ENCODE measurements at regions of chr1 and their contacts with region 1.

Region 1: DNA sequence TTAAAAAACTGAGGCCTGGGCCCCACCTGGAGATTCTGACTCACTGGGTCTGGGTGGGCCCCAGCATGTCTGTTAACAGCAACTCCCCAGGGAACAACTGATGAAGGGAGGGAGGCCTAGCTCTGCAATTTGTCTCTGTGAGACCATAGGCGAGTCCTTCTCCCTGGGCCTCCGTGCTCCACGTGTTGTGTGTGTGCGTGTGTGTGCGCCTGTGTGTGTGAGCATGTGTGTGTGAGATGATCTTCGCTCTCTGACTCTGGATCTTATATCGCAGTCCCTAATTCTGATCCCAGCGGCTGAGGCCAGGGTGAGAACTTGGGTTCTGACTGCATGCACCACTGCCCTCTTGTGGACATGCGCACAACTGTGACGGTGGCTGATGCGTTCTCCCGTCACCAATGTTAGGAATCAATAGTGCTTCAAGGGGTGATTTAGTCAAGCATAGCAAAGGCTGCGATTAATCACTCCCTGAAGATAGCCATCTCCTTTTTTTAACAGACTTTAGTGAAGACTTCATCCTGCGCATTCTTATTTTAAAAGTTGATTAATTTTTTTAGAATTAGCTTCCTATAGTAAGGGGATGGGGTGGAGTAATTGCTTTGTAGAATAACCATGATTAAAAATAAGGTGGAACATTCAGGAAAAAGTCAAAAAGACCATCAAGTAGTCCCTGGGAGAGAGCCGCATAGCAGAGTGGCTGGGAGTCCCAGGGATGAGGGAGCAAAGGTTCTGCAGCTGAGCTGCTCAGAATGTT is 62.4 kb upstream of the USP24 start:
- DNase-seq: peak; percentile 80 to 86 (median 81)
- H3K4me3 ChIP-seq: peak overlapping the region in 1 of 7 experiments; percentile 2
- H3K27ac ChIP-seq: no peak overlapping the region
- H3K4me1 ChIP-seq: peaks cover 0 to 8% (median 3%) of the 10 kb centered on the region in 4 experiments
- H3K27me3 ChIP-seq: peaks cover 0 to 3% (median 0%) of the 10 kb centered on the region in 5 experiments

Region 2: DNA sequence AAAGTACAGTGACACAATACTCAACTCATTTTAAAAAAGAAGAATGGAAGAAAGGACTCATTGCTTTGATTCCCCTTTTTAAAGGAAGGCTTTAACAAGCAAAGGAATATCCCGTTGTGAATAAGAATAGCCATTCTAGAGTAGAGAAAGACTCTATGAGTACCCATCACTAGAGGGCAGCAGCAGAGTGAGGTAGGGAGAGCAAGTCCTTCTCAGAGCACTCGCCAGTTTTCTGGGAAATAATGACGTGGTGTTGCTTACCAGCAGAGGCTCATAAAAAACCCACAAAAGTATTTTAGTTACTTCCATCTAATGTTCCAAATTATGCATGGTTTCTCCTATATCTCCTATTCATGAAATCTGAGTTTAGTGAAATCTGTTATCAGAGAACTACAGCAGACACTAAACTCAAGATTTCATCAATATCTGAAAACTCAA is 137.0 kb before region 1 on chr1:
- CTCF ChIA-PET with region 1: interaction called, 68 read pairs
- POLR2A ChIA-PET with region 1: no interaction called
- DNase-seq: peak; percentile 84 to 90 (median 89)
- H3K4me3 ChIP-seq: no peak overlapping the region
- H3K27ac ChIP-seq: no peak overlapping the region
- H3K4me1 ChIP-seq: peaks cover 0 to 13% (median 6%) of the 10 kb centered on the region in 4 experiments
- H3K27me3 ChIP-seq: no peaks in the 10 kb centered on the region

Region 3: DNA sequence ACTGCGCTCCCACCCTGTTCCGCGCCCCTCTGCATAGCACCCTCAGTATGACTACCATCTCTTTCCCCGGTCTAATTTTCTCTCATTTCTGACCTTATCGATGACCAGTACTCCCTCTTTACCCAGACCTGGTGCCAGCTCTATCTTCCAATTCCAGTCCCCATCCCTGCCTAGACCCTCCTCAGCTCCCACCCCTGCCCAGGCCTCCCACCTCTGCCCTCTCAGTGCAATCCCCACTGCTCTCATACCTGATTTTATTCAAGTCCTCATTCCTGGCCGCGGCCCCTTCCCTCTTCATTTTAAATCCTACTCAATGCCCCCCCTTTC is 63.7 kb before region 1 on chr1:
- CTCF ChIA-PET with region 1: interaction called, 10 read pairs
- POLR2A ChIA-PET with region 1: no interaction called
- DNase-seq: no peak
- H3K4me3 ChIP-seq: peak overlapping the region; percentile 70 to 91 (median 89)
- H3K27ac ChIP-seq: peak overlapping the region; percentile 40 to 95
- H3K4me1 ChIP-seq: peaks cover 60 to 89% (median 72%) of the 10 kb centered on the region in 4 experiments
- H3K27me3 ChIP-seq: no peaks in the 10 kb centered on the region

Region 4: GRCh38 chr1:55301912-55302311 is 24.4 kb after region 1 on chr1:
- CTCF ChIA-PET with region 1: no interaction called
- POLR2A ChIA-PET with region 1: no interaction called
- DNase-seq: no peak
- H3K4me3 ChIP-seq: no peak overlapping the region
- H3K27ac ChIP-seq: no peak overlapping the region
- H3K4me1 ChIP-seq: peaks cover 0 to 5% (median under 1%) of the 10 kb centered on the region in 4 experiments
- H3K27me3 ChIP-seq: peaks cover 0 to 5% (median 0%) of the 10 kb centered on the region in 5 experiments

Region 5: DNA sequence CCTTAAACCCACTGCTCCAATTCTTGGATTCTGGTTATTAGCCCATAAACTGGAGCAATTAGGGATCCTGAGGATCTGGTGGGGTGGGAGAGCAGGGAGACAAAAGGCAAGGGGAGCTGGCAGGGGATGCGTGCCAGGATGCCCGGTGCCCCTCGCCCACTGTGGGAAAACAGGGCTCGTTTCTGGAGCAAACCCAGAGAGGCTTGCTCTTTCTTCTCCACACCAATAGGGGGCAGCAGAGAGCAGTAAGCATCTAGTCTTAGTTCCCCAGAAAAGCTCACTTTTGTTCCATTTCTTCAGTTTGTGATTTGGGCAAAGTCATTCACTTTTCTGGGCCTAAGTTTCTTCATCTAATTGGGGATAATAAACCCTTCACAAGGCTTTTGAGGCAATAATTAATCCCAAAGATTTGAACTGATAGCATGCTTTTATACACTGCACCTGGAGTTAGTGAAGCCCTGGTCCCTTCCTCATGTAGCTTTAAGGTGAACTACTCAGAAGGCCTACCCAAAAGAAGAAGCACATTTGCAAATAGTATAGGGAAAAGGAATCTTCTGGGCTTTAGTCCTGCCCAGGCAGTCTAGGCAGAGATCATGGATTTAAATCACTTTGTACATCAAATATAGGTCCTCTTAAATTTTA is 98.2 kb after region 1 on chr1:
- CTCF ChIA-PET with region 1: no interaction called
- POLR2A ChIA-PET with region 1: no interaction called
- DNase-seq: peak; percentile 22 to 67 (median 59)
- H3K4me3 ChIP-seq: no peak overlapping the region
- H3K27ac ChIP-seq: no peak overlapping the region
- H3K4me1 ChIP-seq: peaks cover 0 to 2% (median 0%) of the 10 kb centered on the region in 4 experiments
- H3K27me3 ChIP-seq: no peaks in the 10 kb centered on the region

Measured in common myeloid progenitor, CD34-positive (primary cell).